PC-3 (cell line): ENCODE measurements at regions of chr15 and their contacts with region 1.

Region 1: GRCh38 chr15:53197426-53197839 is 407.3 kb upstream of the ONECUT1 start:
- DNase-seq: peak; percentile 61
- ATAC-seq: peak; percentile 74
- H3K4me3 ChIP-seq: no peak overlapping the region
- H3K27ac ChIP-seq: no peak overlapping the region
- H3K4me1 ChIP-seq: no peaks in the 10 kb centered on the region
- H3K27me3 ChIP-seq: 0 out of 2 replicates have a peak, but pooled peaks cover under 1% of the 10 kb centered on the region
- CTCF ChIP-seq: peak; percentile 77

Region 2: DNA sequence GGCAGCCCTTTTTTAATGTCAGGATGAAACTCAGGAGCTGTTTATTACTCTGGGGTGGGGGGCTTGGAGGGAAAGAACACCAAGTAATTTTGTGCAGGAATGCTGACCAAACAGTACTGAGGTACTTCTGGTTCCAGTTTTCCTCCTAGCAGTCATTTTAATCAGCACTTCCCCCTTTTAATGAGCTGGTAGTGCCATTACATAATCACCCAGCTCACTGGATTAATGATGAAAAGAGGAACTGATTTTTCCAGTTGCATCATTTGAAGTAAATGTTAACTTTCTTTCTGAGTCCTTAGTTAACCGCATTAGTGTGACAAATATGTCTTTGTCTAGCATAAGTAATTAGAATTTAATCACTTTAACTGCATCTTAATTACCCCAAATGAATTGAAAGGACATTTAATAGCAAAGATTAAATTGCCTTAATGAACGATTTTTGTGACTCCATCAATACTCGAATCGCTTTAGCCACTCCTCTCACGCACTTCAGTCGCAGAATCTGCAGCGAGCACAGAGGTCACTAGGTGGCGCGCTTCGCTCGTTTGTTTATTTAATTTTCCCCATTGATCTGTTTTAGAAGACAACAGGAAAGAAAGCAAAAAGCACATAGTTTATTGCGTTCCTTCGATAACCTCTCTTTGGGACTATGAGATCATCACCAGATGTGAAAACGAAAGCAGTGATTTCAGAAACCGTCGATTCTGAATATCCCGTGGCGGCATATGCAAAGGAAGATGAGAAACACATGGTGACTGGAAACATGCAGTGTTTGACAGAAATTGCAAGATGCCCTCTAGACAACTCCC is 417.1 kb before region 1 on chr15:
- CTCF ChIA-PET with region 1: no interaction called
- POLR2A ChIA-PET with region 1: no interaction called
- intact Hi-C with region 1: loop called (anchors 2 kb)
- DNase-seq: peak; percentile 76
- ATAC-seq: peak; percentile 53
- H3K4me3 ChIP-seq: no peak overlapping the region
- H3K27ac ChIP-seq: no peak overlapping the region
- H3K4me1 ChIP-seq: no peaks in the 10 kb centered on the region
- H3K27me3 ChIP-seq: peaks cover 59% of the 10 kb centered on the region
- CTCF ChIP-seq: peak; percentile 94